Endothelial cell of umbilical vein (primary cell): ENCODE measurements at regions of chr6 and their contacts with region 1.

Region 1: DNA sequence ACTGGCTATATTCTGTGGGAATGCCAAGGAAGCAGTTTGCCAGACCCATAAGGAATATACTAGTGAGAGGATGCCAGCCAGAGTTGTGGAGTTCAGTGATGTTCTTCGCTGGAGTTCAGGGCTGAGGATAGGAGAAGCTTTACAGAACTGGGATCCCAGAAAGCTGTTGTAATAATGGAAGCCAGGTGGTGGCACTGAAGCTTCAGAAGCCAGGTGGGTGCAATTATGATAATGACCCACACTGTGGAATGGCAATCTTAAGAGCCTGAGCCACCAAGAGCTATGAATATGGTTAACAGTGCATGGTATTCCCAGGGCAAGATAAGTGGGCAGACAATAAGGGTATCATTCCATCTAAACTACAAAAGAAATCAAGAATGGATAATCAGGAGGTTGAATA is 25.1 kb upstream of the ENPP1 start:
- DNase-seq: no peak
- H3K4me3 ChIP-seq: no peak overlapping the region
- H3K27ac ChIP-seq: no peak overlapping the region
- H3K4me1 ChIP-seq: no peaks in the 10 kb centered on the region
- H3K27me3 ChIP-seq: peaks cover 3 to 7% of the 10 kb centered on the region in 2 experiments
- CTCF ChIP-seq: no peak
- POLR2A ChIP-seq: no peak

Region 2: DNA sequence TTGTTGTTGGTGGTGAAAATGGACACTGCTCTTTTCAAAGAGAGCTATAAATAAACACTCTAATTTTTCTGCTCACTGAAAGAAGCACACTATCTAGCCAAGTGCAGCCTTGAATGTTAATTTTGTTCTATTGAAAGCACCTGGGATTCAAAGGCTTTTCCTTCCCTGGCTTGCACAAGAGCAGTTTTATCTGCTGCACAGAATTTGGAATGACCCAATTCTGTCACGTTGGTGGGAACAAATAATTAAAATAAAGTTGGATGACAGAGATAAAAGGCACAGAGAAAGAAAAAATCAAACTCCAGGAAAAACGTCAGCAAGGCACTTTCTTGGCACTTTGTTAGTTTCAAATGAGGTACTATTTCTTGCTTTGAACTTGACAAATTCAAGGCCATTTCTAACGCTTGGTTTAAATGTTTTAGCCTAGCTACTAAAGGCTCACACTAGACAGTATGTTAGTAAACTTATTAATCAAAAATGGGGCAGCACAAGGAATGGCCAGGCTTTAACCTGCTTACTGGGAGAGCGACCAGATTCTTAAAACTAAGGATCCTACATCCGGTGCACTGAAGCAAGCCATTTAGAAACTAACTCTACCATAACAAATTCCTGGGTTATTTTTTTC is 355.2 kb before region 1 on chr6:
- CTCF ChIA-PET with region 1: no interaction called
- POLR2A ChIA-PET with region 1: no interaction called
- dilution Hi-C with region 1: no loop called
- intact Hi-C with region 1: no loop called
- DNase-seq: no peak
- H3K4me3 ChIP-seq: no peak overlapping the region
- H3K27ac ChIP-seq: no peak overlapping the region
- H3K4me1 ChIP-seq: no peaks in the 10 kb centered on the region
- H3K27me3 ChIP-seq: no peaks in the 10 kb centered on the region
- CTCF ChIP-seq: no peak
- POLR2A ChIP-seq: no peak

Region 3: DNA sequence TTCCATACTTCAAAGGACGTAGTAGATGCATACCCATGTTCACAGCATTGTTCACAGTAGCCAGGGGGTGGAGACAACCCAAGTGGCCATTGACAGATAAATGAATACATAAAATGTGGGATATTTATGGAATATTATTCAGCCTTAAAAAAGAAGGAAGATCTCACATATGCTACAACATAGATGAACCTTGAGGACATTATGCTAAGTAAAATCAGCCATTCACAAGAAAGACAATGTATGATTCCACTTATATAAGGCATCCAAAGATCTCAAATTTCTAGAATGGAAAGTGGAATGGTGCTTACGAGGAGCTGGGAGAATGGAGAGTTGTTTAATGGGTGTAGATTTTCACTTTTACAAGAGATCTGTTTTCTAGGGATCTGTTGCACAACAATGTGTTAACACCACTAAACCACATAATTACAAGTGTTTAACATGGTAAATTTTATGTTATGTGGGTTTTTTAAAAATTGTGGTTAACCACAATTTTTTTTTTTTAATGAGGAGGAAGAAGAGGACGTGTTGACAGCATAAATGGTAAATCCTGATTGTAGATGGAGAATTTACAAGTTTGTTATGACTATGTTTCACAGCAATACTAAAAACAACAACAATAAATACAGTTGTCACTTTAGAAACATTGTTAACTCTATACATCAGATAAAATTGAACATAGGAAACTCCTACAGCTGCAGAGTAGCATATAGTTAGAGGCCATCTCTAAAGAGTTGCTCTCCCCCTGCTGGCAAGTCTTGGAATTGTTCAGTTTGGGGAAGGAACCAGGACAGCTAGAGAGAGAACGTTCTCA is 126.8 kb after region 1 on chr6:
- CTCF ChIA-PET with region 1: interaction called, 18 read pairs
- POLR2A ChIA-PET with region 1: no interaction called
- dilution Hi-C with region 1: no loop called
- intact Hi-C with region 1: loop called (anchors 2 kb)
- DNase-seq: peak; percentile 74
- H3K4me3 ChIP-seq: no peak overlapping the region
- H3K27ac ChIP-seq: no peak overlapping the region
- H3K4me1 ChIP-seq: no peaks in the 10 kb centered on the region
- H3K27me3 ChIP-seq: peaks cover 0 to 7% of the 10 kb centered on the region in 2 experiments
- CTCF ChIP-seq: peak; percentile 63 to 69
- POLR2A ChIP-seq: no peak